ENCODE measurements at regions of chr3 and their contacts with region 1.

Region 1: DNA sequence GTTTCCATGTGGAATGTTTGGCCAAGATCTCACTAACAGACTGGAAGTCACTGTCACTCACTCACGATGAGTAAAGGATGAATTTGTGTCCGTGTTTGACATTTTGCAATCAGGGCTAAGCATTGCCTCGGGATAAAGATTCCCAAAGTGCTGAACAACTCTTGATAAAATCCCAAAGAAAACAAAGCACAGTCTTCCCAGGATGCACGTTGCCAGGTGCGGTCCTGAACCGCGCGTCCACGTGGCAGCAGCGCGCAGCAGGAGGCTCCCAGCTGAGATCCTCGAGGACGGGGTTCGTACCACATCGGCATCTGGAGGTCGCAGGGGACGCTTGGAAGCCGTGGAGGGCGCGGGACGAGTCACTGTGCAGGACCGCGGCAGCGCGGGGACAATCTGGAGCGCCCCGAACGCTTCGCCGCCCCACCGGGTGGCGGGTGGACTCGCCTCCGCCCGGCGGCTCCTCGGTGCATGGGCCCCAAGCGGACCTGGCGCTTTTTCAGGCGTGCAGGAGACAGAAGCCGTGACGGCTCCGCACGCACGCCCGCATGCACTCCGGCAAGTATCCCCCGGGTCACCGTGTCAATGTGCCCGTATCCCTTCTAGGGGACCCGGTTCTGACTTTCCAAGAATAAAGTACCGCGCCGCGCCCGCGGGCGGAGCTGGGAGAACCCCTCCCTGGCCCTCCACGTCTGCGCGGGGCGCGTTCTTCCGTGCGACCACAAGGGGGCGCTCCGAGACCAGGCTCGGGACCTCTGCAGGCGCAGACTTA is 17.7 kb downstream of the CPN2 start:
- DNase-seq: peak; percentile 83
- H3K4me3 ChIP-seq: peak overlapping the region; percentile 11 to 50 (median 35)
- H3K27ac ChIP-seq: no peak overlapping the region
- H3K4me1 ChIP-seq: peaks cover 5% of the 10 kb centered on the region
- H3K27me3 ChIP-seq: peaks cover 0 to 17% of the 10 kb centered on the region in 2 experiments
- CTCF ChIP-seq: peak; percentile 96 to 98
- POLR2A ChIP-seq: no peak

Region 2: GRCh38 chr3:193780810-193781472 is 552.5 kb before region 1 on chr3:
- CTCF ChIA-PET with region 1: interaction called, 15 read pairs
- POLR2A ChIA-PET with region 1: no interaction called
- dilution Hi-C with region 1: no loop called
- intact Hi-C with region 1: no loop called
- DNase-seq: peak; percentile 79
- H3K4me3 ChIP-seq: no peak overlapping the region
- H3K27ac ChIP-seq: peak overlapping the region; percentile 65
- H3K4me1 ChIP-seq: peaks cover 18% of the 10 kb centered on the region
- H3K27me3 ChIP-seq: peaks cover 17 to 19% of the 10 kb centered on the region in 2 experiments
- CTCF ChIP-seq: peak; percentile 84 to 88
- POLR2A ChIP-seq: no peak

Region 3: DNA sequence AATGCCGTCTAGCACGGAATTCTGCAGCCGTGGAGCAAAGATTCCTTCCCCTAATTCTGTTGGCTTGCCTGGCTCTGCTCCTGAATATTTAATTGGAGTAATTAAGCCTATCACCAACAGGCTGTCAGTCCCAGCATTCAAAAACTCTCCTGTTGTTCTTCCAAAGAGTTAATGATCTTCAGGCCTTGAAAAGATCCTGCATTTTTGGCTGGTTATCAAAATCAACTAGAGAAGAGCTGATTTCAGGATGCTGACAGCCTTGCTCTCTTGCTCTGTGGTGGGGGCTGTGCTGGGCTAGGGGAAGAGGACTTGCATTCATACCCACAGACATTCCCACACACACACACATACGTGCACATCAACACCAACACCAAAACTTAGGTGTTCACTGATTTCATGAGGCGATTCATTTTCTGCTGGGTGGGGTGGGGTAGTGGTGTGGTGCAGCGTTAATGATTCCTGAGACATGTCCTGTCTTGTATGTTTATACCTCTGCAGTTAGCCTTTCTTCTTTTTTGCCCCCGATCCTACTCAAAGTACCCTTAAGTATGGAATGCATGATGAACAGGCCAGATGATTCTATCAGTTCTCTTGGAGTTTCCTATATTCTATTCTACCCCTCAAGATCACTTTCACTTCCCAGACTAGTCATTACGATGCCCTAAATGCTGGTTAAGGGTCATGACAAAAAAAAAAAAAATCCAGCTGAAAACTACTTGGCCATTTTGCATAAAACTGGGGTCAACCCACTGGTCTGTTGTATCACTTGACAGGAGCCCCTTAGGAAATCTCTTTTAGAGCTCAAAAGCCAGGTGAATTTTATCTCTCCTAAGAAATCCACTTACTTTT is 24.6 kb before region 1 on chr3:
- CTCF ChIA-PET with region 1: no interaction called
- POLR2A ChIA-PET with region 1: no interaction called
- dilution Hi-C with region 1: no loop called
- intact Hi-C with region 1: no loop called
- DNase-seq: peak; percentile 48
- H3K4me3 ChIP-seq: no peak overlapping the region
- H3K27ac ChIP-seq: no peak overlapping the region
- H3K4me1 ChIP-seq: peaks cover 14% of the 10 kb centered on the region
- H3K27me3 ChIP-seq: peaks cover 0 to under 1% of the 10 kb centered on the region in 2 experiments
- CTCF ChIP-seq: no peak
- POLR2A ChIP-seq: no peak

Region 4: DNA sequence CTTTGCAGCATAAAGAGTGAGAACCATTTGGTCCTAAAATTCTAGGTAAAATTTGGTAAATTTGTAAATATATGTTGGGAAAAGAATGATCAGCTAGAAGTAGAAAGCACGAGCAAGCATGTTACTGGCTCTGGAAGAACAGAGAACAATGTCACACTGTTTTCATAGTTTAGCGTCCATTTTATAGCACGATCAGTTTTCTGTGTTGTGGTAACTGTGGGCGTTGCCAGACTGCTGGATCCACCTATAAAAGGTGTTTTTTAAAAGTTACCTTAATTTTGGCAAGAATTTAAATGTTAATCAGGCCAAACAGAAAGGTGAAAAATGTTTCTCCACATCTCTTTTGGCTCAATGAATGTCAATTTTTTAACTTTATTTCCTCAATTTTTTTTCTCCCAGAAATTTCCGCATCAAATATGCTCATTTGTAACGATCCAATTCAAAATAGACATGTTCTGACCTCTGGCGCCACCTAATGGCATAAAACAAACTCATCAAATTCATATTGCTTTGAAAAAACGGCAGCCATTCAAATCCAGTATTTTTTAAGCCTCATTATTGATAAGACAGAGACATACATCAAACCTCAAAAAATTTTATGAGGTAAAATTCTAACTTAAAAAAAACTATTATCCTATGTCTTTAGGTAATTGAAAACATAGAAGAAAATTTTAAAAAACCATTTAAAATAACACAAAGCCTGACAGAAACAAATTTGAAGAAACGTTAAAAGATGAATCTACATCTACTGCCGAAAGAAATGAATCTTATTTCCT is 71.2 kb after region 1 on chr3:
- CTCF ChIA-PET with region 1: interaction called, 71 read pairs
- POLR2A ChIA-PET with region 1: interaction called, 4 read pairs
- dilution Hi-C with region 1: no loop called
- intact Hi-C with region 1: loop called (anchors 1 kb)
- DNase-seq: peak; percentile 69
- H3K4me3 ChIP-seq: no peak overlapping the region
- H3K27ac ChIP-seq: no peak overlapping the region
- H3K4me1 ChIP-seq: no peaks in the 10 kb centered on the region
- H3K27me3 ChIP-seq: peaks cover 0 to 1% of the 10 kb centered on the region in 2 experiments
- CTCF ChIP-seq: peak; percentile 36 to 49
- POLR2A ChIP-seq: no peak

Region 5: DNA sequence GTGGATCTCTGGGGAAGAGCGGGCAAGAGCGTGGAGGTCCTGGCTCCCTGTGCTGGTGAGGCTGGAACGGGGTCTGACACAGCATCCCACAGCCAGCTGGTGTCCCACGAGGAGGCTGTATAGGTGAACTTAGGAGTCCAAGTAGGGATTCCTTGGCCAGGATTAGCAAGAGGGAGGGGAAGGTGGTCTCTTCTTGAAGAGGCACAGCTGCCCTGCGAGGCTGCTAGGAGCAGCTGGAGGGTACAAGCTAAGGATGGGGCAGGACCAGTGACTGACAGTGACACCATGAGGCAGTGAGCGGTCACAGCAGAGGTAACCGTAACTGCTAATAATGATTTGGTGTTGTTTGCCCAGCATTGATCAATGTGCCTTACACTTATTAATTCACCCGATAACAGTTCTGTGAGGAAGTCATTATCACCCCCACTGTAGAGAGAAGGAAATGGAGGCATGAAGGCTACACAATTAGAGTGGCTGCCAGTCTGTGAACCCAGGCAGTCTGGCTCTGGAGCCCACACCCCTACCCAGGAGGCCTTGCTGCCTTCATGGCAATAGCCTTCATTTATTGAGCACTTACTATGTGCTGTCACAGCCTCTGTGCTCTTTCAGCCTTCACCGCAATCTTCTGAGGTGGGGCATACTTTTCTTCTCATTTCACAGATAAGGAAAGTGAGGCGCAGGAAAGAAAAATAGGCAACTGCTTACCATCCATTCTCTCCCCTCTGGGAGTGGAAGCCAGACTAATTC is 240.5 kb after region 1 on chr3:
- CTCF ChIA-PET with region 1: interaction called, 8 read pairs
- POLR2A ChIA-PET with region 1: no interaction called
- dilution Hi-C with region 1: no loop called
- intact Hi-C with region 1: loop called (anchors 2 kb)
- DNase-seq: peak; percentile 54
- H3K4me3 ChIP-seq: no peak overlapping the region
- H3K27ac ChIP-seq: no peak overlapping the region
- H3K4me1 ChIP-seq: peaks cover 20% of the 10 kb centered on the region
- H3K27me3 ChIP-seq: no peaks in the 10 kb centered on the region
- CTCF ChIP-seq: peak; percentile 55 to 76
- POLR2A ChIP-seq: no peak

Region 6: DNA sequence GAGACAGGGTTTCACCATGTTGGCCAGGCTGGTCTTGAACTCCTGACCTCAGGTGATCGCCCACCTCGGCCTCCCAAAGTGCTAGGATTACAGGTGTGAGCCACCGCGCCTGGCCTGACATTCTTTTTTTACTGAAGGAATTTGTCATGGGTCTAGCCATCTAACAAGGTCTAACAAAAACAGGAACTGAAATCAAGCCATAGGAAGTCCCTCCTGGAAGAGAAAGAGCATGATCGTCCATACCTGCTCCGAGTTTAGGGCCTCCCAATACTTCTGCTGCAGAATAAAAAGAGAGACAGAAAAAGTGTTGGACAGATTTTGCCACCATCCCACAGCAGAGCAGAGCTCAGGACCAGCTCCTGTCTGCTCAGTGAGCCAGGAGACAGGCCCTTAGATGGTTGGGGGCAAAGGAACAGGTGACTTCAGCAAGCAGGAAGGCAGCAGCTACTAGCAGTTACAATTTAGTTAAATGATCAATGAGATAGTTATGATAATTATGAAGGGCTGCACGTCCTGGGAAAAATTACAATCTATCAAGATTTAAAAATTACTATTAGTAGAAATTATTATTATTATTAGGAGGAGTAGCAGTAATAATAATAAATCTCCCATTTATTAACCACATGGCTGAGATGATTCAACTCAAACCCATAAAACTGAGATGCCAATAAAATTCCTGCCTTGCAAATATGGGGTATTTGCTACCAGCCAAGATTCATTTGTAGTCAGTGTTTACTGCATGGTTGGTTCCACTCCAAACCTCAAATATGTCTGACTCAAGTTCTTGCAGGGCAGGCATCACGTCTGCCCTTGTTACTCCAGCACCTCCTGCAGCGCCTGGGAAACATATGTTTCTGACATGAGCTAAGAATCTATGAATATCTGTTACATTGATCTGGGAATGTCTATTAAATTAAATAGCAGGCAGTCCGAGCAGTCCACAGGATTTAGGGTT is 259.7 kb after region 1 on chr3:
- CTCF ChIA-PET with region 1: interaction called, 95 read pairs
- POLR2A ChIA-PET with region 1: no interaction called
- dilution Hi-C with region 1: no loop called
- intact Hi-C with region 1: loop called (anchors 1 kb)
- DNase-seq: peak; percentile 62
- H3K4me3 ChIP-seq: no peak overlapping the region
- H3K27ac ChIP-seq: peak overlapping the region; percentile 54
- H3K4me1 ChIP-seq: peaks cover 12% of the 10 kb centered on the region
- H3K27me3 ChIP-seq: no peaks in the 10 kb centered on the region
- CTCF ChIP-seq: no peak
- POLR2A ChIP-seq: no peak

Region 7: GRCh38 chr3:195999896-196000295 is 1666.5 kb after region 1 on chr3:
- CTCF ChIA-PET with region 1: no interaction called
- POLR2A ChIA-PET with region 1: no interaction called
- dilution Hi-C with region 1: no loop called
- intact Hi-C with region 1: no loop called
- DNase-seq: no peak
- H3K4me3 ChIP-seq: no peak overlapping the region
- H3K27ac ChIP-seq: no peak overlapping the region
- H3K4me1 ChIP-seq: no peaks in the 10 kb centered on the region
- H3K27me3 ChIP-seq: peaks cover 0 to 3% of the 10 kb centered on the region in 2 experiments
- CTCF ChIP-seq: no peak
- POLR2A ChIP-seq: no peak